ENCODE measurements at regions of chr2 and their contacts with region 1.

Region 1: GRCh38 chr2:152036611-152037469 is 62.0 kb downstream of the CACNB4 start:
- DNase-seq: peak; percentile 67
- H3K4me3 ChIP-seq: no peak overlapping the region
- H3K27ac ChIP-seq: no peak overlapping the region
- H3K4me1 ChIP-seq: no peaks in the 10 kb centered on the region
- CTCF ChIP-seq: peak; percentile 89

Region 2: DNA sequence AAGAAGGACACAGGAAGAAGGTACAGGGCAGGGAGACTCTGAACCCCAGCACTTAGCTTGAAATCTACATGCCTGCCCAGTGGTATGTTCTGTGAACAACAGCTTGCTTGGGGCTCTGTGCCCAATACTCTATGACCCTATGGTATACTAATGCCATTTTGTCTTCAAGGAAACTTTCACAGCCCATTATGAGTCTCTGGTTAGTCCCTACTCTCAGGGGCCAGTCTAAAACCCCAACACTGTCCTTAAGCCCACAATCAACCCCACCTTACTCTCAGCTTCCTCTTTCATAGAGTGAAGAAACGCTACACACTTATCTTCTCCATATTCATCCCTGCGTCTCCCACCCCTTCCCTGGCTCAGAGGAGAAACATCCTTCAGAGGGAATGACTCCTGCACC is 318.6 kb before region 1 on chr2:
- CTCF ChIA-PET with region 1: no interaction called
- POLR2A ChIA-PET with region 1: no interaction called
- intact Hi-C with region 1: no loop called
- DNase-seq: no peak
- H3K4me3 ChIP-seq: no peak overlapping the region
- H3K27ac ChIP-seq: no peak overlapping the region
- H3K4me1 ChIP-seq: no peaks in the 10 kb centered on the region
- CTCF ChIP-seq: no peak

Region 3: DNA sequence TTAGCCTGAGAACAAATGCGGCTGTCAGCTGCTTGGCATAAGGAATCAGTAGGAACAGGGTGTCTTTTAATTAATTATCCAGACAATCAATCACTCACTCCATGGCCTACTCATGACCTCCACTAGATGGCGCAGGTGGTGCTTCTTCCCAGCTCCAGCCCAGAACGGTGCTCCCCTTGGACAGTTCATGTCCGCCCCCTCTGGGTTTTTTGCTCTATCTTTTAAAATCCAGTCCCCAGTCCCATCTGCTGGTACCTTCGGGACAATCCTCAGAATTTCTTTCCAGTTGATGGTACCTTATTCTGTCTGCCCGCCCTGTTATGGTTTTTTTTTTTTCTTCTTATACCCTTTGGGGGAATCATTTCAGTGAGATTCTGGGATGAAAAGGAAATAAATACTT is 37.8 kb before region 1 on chr2:
- CTCF ChIA-PET with region 1: no interaction called
- POLR2A ChIA-PET with region 1: no interaction called
- intact Hi-C with region 1: no loop called
- DNase-seq: peak; percentile 59
- H3K4me3 ChIP-seq: no peak overlapping the region
- H3K27ac ChIP-seq: no peak overlapping the region
- H3K4me1 ChIP-seq: no peaks in the 10 kb centered on the region
- CTCF ChIP-seq: peak; percentile 87

Region 4: GRCh38 chr2:152175458-152176325 is 138.9 kb after region 1 on chr2 and contains the start of gene STAM2:
- CTCF ChIA-PET with region 1: no interaction called
- POLR2A ChIA-PET with region 1: no interaction called
- intact Hi-C with region 1: loop called (anchors 1 kb)
- DNase-seq: peak; percentile 91
- H3K4me3 ChIP-seq: peak within 1 kb of the TSS; percentile 96
- H3K27ac ChIP-seq: peak within 1 kb of the TSS; percentile 67
- H3K4me1 ChIP-seq: peaks cover 16% of the 10 kb centered on the region
- CTCF ChIP-seq: peak; percentile 84
- total RNA-seq, gene STAM2: 17.7 and 19.6 TPM in 2 replicates

Region 5: GRCh38 chr2:152635635-152636298 is 598.9 kb after region 1 on chr2:
- CTCF ChIA-PET with region 1: no interaction called
- POLR2A ChIA-PET with region 1: no interaction called
- intact Hi-C with region 1: loop called (anchors 2 kb)
- DNase-seq: peak; percentile 46
- H3K4me3 ChIP-seq: no peak overlapping the region
- H3K27ac ChIP-seq: no peak overlapping the region
- H3K4me1 ChIP-seq: no peaks in the 10 kb centered on the region
- CTCF ChIP-seq: peak; percentile 88

Region 6: GRCh38 chr2:152676461-152676860 is 639.6 kb after region 1 on chr2:
- CTCF ChIA-PET with region 1: no interaction called
- POLR2A ChIA-PET with region 1: no interaction called
- intact Hi-C with region 1: no loop called
- DNase-seq: no peak
- H3K4me3 ChIP-seq: no peak overlapping the region
- H3K27ac ChIP-seq: no peak overlapping the region
- H3K4me1 ChIP-seq: no peaks in the 10 kb centered on the region
- CTCF ChIP-seq: no peak